PC-9 (cell line): ENCODE measurements at regions of chr13 and their contacts with region 1.

Region 1: DNA sequence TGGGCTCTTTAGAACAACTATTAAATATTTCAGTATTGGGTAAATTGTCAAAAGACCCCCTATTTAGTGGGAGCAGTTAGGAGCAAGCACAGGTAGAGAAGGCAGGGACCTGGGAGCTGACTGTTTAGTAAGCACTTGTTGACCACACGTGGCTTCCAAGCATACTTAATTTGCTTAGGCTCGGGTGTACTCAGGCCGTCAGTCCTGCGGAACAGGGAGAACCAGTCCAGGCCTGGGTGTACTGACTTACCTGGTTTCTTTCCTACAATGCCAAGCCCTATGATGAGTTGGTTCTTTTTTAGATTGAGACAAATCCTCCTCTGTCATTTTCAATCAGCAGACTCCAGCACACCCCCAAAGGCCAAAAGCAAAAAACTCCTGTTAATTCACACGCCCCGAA is 90.0 kb downstream of the WDFY2 start:
- DNase-seq: peak; percentile 85 to 96
- H3K4me3 ChIP-seq: peak overlapping the region; percentile 45; the same call in 1 of the 2 replicates
- H3K27ac ChIP-seq: peak overlapping the region; percentile 90
- H3K4me1 ChIP-seq: peaks cover 39% of the 10 kb centered on the region
- H3K27me3 ChIP-seq: no peaks in the 10 kb centered on the region
- CTCF ChIP-seq: no peak

Region 2: GRCh38 chr13:51583875-51584730 is 90.2 kb before region 1 on chr13 and contains the start of gene WDFY2:
- CTCF ChIA-PET with region 1: no interaction called
- POLR2A ChIA-PET with region 1: no interaction called
- intact Hi-C with region 1: loop called (anchors 1 kb)
- DNase-seq: peak; percentile 98 to 99
- H3K4me3 ChIP-seq: peak within 1 kb of the TSS; percentile 91
- H3K27ac ChIP-seq: peak within 1 kb of the TSS; percentile 69
- H3K4me1 ChIP-seq: peaks cover 28% of the 10 kb centered on the region
- H3K27me3 ChIP-seq: no peaks in the 10 kb centered on the region
- CTCF ChIP-seq: 0 out of 2 replicates have a peak, but pooled peaks have one; percentile 11
- total RNA-seq, gene WDFY2: 14.1 and 14.3 TPM in 2 replicates

Region 3: GRCh38 chr13:51714663-51715168 is 40.4 kb after region 1 on chr13:
- CTCF ChIA-PET with region 1: no interaction called
- POLR2A ChIA-PET with region 1: no interaction called
- intact Hi-C with region 1: loop called (anchors 1 kb)
- DNase-seq: peak; percentile 44 to 96
- H3K4me3 ChIP-seq: 0 out of 2 replicates have a peak overlapping the region, but pooled peaks have one; percentile 10
- H3K27ac ChIP-seq: peak overlapping the region; percentile 98
- H3K4me1 ChIP-seq: peaks cover 28% of the 10 kb centered on the region
- H3K27me3 ChIP-seq: no peaks in the 10 kb centered on the region
- CTCF ChIP-seq: no peak

Region 4: DNA sequence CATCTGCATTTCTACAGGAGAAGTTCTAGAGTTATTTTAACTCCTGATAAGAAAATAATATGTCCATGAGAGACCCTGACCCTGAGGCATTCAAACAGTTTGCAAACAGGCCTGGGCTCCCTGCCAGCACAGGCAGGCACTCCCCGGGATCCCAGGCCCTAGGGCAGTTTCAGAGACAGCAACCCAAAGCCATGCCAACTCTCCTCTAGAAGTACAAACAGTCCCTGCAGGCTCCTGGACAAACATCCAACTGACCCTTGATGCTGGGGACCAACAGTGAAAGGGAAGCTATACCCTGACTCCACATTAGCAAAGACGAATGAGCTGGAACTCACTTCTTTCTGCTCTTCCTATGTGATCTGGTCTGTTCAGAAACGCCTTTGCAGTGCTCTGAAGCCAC is 232.3 kb after region 1 on chr13:
- CTCF ChIA-PET with region 1: no interaction called
- POLR2A ChIA-PET with region 1: no interaction called
- intact Hi-C with region 1: no loop called
- DNase-seq: peak in 1 of 2 experiments; percentile 42
- H3K4me3 ChIP-seq: no peak overlapping the region
- H3K27ac ChIP-seq: no peak overlapping the region
- H3K4me1 ChIP-seq: no peaks in the 10 kb centered on the region; the same call in 1 of the 2 replicates
- H3K27me3 ChIP-seq: peaks cover 24% of the 10 kb centered on the region; the same call in 1 of the 2 replicates
- CTCF ChIP-seq: no peak

Region 5: DNA sequence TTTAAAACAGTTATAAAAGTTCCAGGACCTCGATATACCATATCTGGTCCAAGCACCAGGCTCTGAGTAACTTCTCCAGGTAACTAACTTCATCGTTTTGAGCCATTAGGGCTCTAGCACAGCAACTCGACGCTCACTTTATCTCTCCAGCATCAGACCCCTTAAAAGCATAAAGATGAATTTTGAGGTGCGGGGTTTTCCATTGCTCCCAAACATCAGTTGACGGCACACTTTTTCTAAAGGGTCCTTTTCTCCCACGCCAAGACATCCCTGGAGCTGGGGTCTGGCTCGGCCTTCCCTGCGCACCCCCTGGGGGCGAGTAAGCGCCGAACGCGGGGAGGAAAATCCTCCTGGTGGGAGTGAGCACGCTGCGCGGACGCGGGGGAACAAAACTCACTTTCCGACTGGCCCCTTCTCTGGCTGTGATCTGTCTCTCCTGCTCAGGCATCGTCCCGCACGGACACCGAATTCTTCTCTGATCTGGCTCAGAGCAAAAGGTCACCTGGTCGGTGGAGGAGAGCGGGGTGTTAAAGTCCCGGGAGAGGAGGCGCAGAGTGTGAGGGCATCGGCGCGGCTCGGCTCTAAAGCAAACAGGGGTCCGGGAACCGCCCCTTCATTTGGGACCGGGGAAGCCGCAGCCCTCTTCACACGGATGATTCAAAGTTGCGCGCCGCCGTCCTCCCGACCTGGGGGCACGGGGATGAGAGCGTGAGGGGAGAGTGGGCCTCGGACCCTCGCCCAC is 336.8 kb after region 1 on chr13 and contains the start of gene ATP7B:
- CTCF ChIA-PET with region 1: no interaction called
- POLR2A ChIA-PET with region 1: no interaction called
- intact Hi-C with region 1: no loop called
- DNase-seq: no peak
- H3K4me3 ChIP-seq: peak within 1 kb of the TSS; percentile 97
- H3K27ac ChIP-seq: peak within 1 kb of the TSS; percentile 41
- H3K4me1 ChIP-seq: peaks cover 9% of the 10 kb centered on the region
- H3K27me3 ChIP-seq: peaks cover 4% of the 10 kb centered on the region; the same call in 1 of the 2 replicates
- CTCF ChIP-seq: no peak
- total RNA-seq, gene ATP7B: 0.43 and 1.2 TPM in 2 replicates